Astrocyte of the cerebellum (primary cell): ENCODE measurements at regions of chr19 and their contacts with region 1.

Region 1: DNA sequence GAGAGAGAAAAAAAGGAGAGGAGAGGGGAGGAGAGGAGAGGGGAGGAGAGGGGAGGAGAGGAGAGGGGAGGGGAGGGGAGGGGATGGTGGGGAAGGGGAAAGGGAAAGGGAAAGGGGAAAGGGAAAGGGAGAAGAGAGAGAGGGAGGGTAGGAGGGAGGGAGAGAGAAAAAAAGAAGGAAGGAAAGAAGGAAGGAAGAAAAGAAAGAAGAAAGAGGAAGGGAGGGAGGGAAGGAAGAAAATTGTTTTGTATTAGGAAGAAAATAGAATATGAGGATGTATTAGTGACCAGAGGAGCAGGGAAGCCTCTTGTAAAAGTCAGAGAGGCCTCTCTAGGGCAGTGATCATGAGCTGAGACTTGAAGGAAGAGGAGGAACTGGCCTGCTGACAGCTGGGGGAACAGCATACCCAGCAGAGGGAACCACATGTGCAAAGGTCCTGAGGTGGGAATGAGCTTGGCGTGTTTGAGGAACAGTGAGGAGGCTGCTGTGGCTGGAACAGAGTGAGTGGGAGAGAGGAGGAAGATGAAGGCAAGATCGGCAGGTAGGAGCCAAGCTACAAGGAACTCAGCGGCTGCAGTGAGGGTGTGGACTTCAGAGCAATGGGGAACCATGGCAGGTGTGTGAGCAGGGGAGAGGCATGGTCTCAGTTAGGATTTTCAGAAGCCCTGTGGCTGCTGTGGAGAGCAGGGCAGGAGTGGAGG is 9.6 kb upstream of the KCNN1 start:
- DNase-seq: no peak
- H3K4me3 ChIP-seq: no peak overlapping the region
- CTCF ChIP-seq: no peak

Region 2: GRCh38 chr19:17889609-17890214 is 67.6 kb before region 1 on chr19:
- in situ Hi-C with region 1: no loop called
- DNase-seq: peak; percentile 32
- H3K4me3 ChIP-seq: no peak overlapping the region
- CTCF ChIP-seq: no peak

Region 3: DNA sequence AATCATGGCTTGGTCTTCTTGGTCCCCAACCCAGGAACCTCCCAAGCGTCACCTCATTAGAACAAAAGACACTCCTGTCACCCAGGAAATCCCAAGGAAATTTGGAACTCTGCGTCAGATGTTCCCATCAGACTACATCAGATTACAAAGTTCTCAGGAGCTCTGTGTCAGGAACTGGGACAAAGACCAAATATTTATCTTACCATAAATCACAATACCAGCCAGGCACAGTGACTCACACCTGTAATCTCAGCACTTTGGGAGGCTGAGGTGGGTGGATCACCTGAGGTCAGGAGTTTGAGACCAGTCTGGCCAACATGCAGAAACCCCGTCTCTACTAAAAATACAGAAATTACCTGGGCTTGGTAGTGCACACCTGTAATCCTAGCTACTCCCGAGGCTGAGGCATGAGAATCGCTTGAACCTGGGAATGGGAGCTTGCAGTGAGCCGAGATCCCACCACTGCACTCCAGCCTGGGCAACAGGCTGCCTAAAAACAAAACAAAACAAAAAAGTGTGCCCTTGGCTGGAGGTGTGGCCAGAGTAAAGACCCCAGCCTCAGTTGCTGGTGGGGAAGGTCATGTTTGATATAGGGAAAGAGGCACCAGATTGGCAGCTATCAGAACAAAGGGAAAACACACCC is 41.2 kb before region 1 on chr19:
- in situ Hi-C with region 1: loop called (anchors 5 kb)
- DNase-seq: no peak
- H3K4me3 ChIP-seq: no peak overlapping the region
- CTCF ChIP-seq: no peak

Region 4: DNA sequence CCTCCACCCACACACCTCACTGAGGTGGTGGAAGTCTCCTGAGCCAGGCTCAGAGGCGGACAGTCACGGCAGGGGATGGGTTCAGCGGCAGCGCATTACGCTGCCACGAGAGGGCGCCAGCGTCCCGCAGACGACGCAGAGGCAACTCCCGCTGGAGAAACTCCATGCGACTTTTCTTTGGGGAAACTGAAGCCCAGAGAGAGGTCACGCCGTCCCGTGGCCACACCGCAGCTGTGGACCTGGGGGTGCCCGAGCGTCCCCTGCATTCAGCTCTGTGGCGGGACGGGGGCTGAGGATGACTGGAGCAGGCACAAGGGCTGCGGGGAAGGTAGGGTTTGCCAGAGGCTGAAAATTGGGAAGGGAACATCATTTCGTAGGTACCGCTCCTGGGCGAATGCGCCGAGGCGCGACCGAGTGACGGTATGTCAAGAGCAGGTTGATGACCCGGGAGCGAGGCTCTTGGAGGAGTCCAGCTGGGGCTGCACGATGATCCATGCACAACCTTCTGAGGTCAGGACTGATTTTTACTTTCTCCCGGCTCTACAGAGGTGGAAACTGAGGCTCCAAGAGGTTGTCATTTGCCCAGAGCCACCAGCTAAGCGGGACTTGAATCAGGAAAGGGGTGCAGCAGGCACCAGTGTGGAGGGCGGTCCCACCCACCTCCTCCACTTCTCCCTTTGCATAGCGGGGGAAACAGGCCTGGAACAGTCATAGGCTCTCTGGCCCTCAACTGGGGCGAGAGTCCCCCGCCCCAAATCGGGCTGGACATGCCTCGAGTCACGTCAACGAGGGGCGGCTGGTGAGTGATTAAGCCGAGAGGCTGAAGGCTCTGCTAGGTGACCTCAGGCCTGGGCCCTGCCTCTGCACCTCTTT is 50.0 kb after region 1 on chr19:
- in situ Hi-C with region 1: no loop called
- DNase-seq: peak; percentile 53
- H3K4me3 ChIP-seq: peak overlapping the region; percentile 46
- CTCF ChIP-seq: peak; percentile 93

Region 5: GRCh38 chr19:18100710-18101109 is 143.4 kb after region 1 on chr19:
- in situ Hi-C with region 1: no loop called
- DNase-seq: no peak
- H3K4me3 ChIP-seq: no peak overlapping the region
- CTCF ChIP-seq: no peak

Region 6: GRCh38 chr19:18183529-18183928 is 226.2 kb after region 1 on chr19:
- in situ Hi-C with region 1: no loop called
- DNase-seq: no peak
- H3K4me3 ChIP-seq: no peak overlapping the region
- CTCF ChIP-seq: no peak